Activated naive CD4-positive, alpha-beta T cell treated with anti-CD3 and anti-CD28 coated beads, Interleukin-2, amount 10 ng/mL, durations not matched to agents 7 days and 5 days (primary cell): ENCODE measurements at regions of chr4 and their contacts with region 1.

Region 1: DNA sequence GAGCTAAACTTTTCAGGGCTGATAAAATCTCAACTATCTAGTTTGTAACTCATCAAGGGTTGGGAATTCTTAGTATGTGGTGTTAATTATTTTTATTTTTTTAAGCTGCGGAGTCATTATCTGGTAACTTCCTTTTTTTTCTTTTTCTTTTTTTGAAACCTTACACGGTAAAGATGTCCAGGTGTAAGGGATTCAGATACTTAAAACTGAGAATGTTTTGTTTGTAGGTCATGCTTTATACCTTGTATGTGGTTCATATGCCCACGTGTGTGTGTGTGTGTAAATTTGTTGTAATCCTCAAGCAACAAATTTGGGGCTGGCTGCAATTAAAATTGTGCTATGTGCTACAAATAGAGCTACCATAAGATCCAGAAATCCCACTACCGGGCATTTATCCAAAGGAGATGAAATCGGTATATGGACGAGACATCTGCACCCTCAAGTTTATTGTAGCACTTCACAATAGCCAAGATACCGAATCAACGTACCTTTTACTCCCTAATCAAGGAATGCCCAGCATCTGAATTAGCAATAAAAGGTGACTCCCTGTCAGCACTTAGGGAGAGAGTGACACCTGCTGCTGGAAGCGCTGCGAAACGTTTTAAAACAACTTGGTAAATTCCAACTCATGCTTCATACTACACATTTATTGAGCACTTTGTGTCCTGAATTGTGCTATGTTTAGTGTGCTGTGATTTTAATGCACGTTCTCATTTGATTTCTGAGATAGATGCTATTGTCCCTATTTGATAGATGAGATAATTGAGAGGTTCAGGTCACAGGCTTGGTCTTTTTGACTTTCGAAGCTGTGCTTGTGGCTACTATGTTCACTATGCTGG is 16.1 kb downstream of the MSMO1 start:
- DNase-seq: peak; percentile 44
- H3K4me3 Mint-ChIP-seq: no peak overlapping the region
- H3K27ac Mint-ChIP-seq: no peak overlapping the region
- H3K4me1 Mint-ChIP-seq: no peaks in the 10 kb centered on the region
- H3K27me3 Mint-ChIP-seq: no peaks in the 10 kb centered on the region

Region 2: DNA sequence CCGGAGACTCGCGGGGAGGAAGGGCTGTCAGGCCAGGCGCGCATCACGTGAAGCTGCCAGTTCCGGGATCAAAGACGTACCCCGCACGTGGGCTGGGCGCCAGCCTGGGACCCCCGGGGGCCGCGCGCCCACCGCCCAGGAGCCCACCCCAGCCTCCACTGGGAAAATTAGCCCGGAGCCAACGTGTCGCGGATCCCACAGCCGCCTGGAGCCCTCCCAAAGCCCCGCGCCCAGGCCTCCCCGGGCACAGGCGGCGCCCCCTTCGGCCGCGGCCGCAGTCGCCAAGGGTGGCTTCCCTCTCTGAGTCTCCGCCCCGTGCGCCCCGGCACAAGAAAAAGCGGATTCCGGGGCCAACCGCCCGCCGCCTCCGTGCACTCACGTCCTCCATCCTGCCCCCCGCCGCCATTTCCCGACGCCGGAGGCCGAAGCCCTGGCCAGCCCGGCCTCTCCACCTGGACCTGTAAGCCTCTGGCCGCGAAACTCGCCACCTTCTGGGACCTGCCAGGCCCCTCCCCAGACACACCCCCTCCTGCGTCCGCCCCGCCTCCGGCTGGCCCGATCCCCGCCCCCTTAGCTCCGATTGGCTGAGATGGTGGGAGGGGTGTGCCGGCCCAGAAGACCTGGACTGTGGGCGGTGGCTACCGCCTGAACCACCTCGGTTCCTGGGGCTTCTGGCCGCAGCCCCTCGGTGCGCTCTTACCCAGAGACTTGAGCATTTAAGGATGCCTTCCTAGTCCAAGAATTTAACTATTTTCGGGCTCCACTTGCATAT is 231.0 kb before region 1 on chr4 and contains the start of gene TMEM192:
- CTCF ChIA-PET with region 1: interaction called, 24 read pairs
- DNase-seq: peak; percentile 94
- H3K4me3 Mint-ChIP-seq: peak within 1 kb of the TSS; percentile 86
- H3K27ac Mint-ChIP-seq: peak within 1 kb of the TSS; percentile 90
- H3K4me1 Mint-ChIP-seq: peaks cover 24% of the 10 kb centered on the region
- H3K27me3 Mint-ChIP-seq: peaks cover 19% of the 10 kb centered on the region

Region 3: DNA sequence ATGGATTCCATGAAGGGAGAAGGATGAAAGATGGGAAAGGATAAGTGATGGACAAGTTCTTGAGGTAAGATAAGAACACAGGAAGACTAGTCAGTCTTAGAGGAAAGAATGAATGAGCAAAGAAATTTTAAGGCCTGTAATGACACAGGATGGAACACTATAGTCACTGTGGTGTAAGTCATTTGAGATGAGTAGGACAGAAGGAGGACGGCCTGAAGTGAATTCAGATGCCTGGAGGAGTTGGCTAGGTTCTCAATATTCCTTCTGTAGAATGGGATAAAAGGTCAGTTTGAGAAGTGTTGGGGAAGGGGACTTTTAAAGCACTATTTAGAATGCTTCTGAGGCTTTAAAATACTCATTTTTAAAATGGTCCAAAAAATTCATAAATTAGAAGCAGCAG is 12.2 kb before region 1 on chr4:
- CTCF ChIA-PET with region 1: interaction called, 14 read pairs
- DNase-seq: no peak
- H3K4me3 Mint-ChIP-seq: peak overlapping the region; percentile 22
- H3K27ac Mint-ChIP-seq: no peak overlapping the region
- H3K4me1 Mint-ChIP-seq: peaks cover 46% of the 10 kb centered on the region
- H3K27me3 Mint-ChIP-seq: no peaks in the 10 kb centered on the region